OCI-LY7 (cell line): ENCODE measurements at regions of chr10 and their contacts with region 1.

Region 1: GRCh38 chr10:96229568-96230030 is 41.8 kb downstream of the BLNK start:
- DNase-seq: peak; percentile 91
- H3K4me3 ChIP-seq: no peak overlapping the region
- H3K27ac ChIP-seq: peak overlapping the region; percentile 60
- H3K4me1 ChIP-seq: peaks cover 26% of the 10 kb centered on the region
- CTCF ChIP-seq: peak; percentile 100

Region 2: GRCh38 chr10:96034625-96035024 is 195.0 kb before region 1 on chr10:
- CTCF ChIA-PET with region 1: no interaction called
- POLR2A ChIA-PET with region 1: no interaction called
- intact Hi-C with region 1: loop called (anchors 5 kb)
- DNase-seq: peak; percentile 52
- H3K4me3 ChIP-seq: no peak overlapping the region
- H3K27ac ChIP-seq: peak overlapping the region; percentile 6
- H3K4me1 ChIP-seq: peaks cover 18% of the 10 kb centered on the region
- CTCF ChIP-seq: no peak

Region 3: DNA sequence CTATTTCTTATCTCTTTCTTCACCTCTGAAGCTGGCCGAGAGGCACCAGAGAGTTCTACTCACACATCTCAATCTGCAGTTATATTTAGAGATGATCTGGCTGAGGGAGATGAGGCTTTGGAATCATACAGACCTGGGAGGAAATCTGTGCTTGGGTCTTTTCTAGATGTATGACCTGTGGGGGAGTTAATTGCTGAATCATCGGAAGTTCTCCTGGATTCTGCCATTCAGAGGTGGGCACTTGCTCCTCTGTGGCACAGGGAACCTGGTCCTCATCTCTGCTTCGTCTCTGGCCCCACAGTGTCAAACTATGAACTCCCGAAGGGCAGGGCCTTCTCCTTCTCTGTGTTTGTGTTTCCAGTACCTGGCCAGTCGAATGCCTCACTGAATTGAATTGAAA is 10.8 kb before region 1 on chr10:
- CTCF ChIA-PET with region 1: no interaction called
- POLR2A ChIA-PET with region 1: no interaction called
- intact Hi-C with region 1: no loop called
- DNase-seq: no peak
- H3K4me3 ChIP-seq: no peak overlapping the region
- H3K27ac ChIP-seq: no peak overlapping the region
- H3K4me1 ChIP-seq: peaks cover 17% of the 10 kb centered on the region
- CTCF ChIP-seq: no peak

Region 4: GRCh38 chr10:96339957-96340904 is 110.6 kb after region 1 on chr10:
- CTCF ChIA-PET with region 1: interaction called, 9 read pairs
- POLR2A ChIA-PET with region 1: no interaction called
- intact Hi-C with region 1: loop called (anchors 1 kb)
- DNase-seq: peak; percentile 88
- H3K4me3 ChIP-seq: no peak overlapping the region
- H3K27ac ChIP-seq: no peak overlapping the region
- H3K4me1 ChIP-seq: peaks cover 13% of the 10 kb centered on the region
- CTCF ChIP-seq: peak; percentile 99

Region 5: DNA sequence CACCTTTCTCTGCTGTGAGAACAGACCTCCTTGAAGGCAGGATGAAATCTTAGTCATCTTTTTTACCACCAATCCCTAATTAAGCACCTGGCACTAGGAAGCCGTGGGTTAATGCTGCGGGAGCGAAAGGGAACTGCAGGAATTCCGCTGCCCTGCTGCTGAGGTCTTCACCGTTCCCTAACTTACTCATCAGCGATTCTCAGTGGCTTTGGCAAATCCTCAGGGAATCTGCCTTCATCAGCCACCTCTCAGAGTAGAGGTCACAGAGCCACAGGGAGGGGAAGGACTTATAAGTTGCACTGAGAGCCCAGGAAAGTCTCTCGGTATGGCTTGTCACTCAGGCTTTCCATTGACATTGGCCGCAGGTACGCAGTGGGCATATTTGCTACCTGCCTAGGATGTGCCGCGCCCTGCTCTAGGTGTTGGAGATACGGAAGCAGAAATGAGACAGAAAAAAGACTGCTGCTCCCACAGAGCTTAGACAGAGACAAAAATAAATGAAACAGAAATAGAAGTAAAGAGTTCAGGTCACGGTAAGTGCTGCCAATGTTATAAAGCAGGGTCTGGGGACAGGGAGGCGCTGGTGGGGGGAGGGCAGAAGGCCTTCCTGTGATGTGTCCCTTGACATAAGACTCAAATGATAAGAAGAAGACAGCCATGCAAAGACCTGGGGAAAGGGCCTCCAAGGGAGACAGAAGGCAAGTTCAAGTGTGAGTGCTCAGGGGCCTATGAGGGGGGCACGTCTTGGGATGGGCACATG is 201.8 kb after region 1 on chr10:
- CTCF ChIA-PET with region 1: no interaction called
- POLR2A ChIA-PET with region 1: no interaction called
- intact Hi-C with region 1: no loop called
- DNase-seq: no peak
- H3K4me3 ChIP-seq: no peak overlapping the region
- H3K27ac ChIP-seq: no peak overlapping the region
- H3K4me1 ChIP-seq: no peaks in the 10 kb centered on the region
- CTCF ChIP-seq: no peak